ENCODE measurements at regions of chr22 and their contacts with region 1.

Region 1: GRCh38 chr22:32144496-32145274 is 14.4 kb downstream of the C22orf42 start:
- DNase-seq: no peak
- ATAC-seq: peak; percentile 7
- H3K4me3 Mint-ChIP-seq: no peak overlapping the region
- H3K27ac Mint-ChIP-seq: no peak overlapping the region
- H3K4me1 Mint-ChIP-seq: peaks cover 38% of the 10 kb centered on the region
- H3K27me3 Mint-ChIP-seq: no peaks in the 10 kb centered on the region

Region 2: DNA sequence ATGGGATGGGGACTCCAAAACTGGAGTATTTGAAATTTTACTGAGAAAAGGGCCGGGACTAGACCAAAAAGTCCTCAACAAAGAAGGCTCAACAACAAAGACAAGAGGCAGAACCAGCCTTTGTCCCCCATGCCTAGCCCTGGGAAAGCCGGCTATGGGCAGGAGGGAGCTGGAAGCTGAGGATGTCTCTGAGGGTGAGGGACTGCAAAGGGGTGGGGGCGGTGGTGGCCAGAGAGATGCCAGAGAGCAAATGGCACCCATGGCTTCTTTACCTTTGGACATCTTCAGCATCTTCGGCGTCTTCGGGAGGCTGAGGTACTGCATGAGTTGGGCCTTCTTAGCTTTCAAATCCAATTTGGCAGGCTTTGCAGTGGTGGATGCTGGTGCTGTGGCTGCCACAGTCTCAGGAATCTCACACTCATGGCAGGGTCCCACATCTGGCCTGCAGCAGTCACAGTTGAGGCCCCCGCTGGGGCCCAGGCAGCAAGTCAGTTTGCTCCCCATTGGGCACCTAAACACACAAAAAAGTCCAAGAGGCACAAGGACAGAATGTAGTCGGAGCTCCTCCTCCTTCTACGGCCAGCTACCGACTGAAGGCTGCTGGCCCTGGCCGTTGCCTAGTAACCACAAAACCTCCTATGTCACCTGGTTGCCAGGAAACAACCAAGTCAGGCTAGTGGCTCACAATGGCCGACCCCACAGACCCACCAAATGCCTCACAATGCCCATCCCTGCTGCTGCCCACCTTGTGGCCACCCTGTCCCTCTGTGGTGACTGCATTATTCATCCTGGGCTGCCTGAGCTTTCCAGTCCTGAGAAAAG is 14.2 kb after region 1 on chr22 and contains the start of gene C22orf42:
- CTCF ChIA-PET with region 1: no interaction called
- POLR2A ChIA-PET with region 1: no interaction called
- intact Hi-C with region 1: no loop called
- DNase-seq: no peak
- ATAC-seq: no peak
- H3K4me3 Mint-ChIP-seq: no peak within 1 kb of the TSS
- H3K27ac Mint-ChIP-seq: no peak within 1 kb of the TSS
- H3K4me1 Mint-ChIP-seq: no peaks in the 10 kb centered on the region
- H3K27me3 Mint-ChIP-seq: peaks cover 3% of the 10 kb centered on the region
- total RNA-seq, gene C22orf42: not detected

Region 3: DNA sequence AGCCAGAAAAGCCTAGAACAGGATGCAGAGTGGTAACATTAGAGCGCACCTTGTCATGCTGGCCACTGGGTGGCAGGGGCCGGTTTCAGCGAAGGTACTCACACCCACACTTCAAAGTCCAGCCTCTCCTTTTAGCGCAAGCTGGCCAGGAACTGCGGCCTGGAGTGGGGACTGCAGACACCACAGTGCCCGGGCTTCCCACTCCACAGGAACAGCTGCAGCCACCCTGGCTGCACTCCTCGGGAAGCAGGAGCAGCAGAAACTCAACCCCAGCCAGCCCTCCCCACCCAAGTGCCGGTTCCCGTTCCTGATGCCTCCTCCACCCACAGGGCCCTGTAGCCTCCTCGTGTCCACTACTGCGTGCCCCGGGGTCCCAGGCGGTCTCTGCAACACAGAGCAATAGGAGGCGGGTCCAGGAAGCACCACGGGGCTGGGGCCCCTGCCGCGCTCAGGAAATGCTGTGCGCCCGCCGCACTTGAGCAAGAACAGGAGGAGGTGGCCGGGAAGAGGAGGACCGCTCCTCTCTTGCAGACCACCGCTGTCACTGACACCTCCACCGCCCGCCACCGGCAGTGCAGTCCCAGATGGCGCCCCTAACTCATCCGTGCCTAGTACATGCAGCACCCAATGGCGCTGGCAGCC is 58.0 kb after region 1 on chr22:
- CTCF ChIA-PET with region 1: no interaction called
- POLR2A ChIA-PET with region 1: no interaction called
- intact Hi-C with region 1: loop called (anchors 2 to 5 kb)
- DNase-seq: peak; percentile 59
- ATAC-seq: peak; percentile 55
- H3K4me3 Mint-ChIP-seq: peak overlapping the region; percentile 63
- H3K27ac Mint-ChIP-seq: no peak overlapping the region
- H3K4me1 Mint-ChIP-seq: peaks cover 21% of the 10 kb centered on the region
- H3K27me3 Mint-ChIP-seq: peaks cover 18% of the 10 kb centered on the region

Region 4: GRCh38 chr22:32482708-32483107 is 338.0 kb after region 1 on chr22:
- CTCF ChIA-PET with region 1: no interaction called
- POLR2A ChIA-PET with region 1: no interaction called
- intact Hi-C with region 1: loop called (anchors 2 to 10 kb)
- DNase-seq: peak; percentile 61
- ATAC-seq: peak; percentile 90
- H3K4me3 Mint-ChIP-seq: no peak overlapping the region
- H3K27ac Mint-ChIP-seq: no peak overlapping the region
- H3K4me1 Mint-ChIP-seq: peaks cover 25% of the 10 kb centered on the region
- H3K27me3 Mint-ChIP-seq: no peaks in the 10 kb centered on the region